ENCODE measurements at regions of chr17 and their contacts with region 1.

Region 1: GRCh38 chr17:49779739-49780231 is 8.7 kb upstream of the KAT7 start:
- DNase-seq: peak; percentile 81
- H3K4me3 ChIP-seq: no peak overlapping the region
- H3K27ac ChIP-seq: no peak overlapping the region
- H3K4me1 ChIP-seq: peaks cover 15% of the 10 kb centered on the region
- H3K27me3 ChIP-seq: no peaks in the 10 kb centered on the region
- CTCF ChIP-seq: peak; percentile 53 to 78

Region 2: GRCh38 chr17:49258394-49258793 is 521.4 kb before region 1 on chr17:
- CTCF ChIA-PET with region 1: interaction called, 17 read pairs
- dilution Hi-C with region 1: no loop called
- in situ Hi-C with region 1: no loop called
- intact Hi-C with region 1: no loop called
- DNase-seq: no peak
- H3K4me3 ChIP-seq: no peak overlapping the region
- H3K27ac ChIP-seq: no peak overlapping the region
- H3K4me1 ChIP-seq: peaks cover 12% of the 10 kb centered on the region
- H3K27me3 ChIP-seq: no peaks in the 10 kb centered on the region
- CTCF ChIP-seq: no peak

Region 3: DNA sequence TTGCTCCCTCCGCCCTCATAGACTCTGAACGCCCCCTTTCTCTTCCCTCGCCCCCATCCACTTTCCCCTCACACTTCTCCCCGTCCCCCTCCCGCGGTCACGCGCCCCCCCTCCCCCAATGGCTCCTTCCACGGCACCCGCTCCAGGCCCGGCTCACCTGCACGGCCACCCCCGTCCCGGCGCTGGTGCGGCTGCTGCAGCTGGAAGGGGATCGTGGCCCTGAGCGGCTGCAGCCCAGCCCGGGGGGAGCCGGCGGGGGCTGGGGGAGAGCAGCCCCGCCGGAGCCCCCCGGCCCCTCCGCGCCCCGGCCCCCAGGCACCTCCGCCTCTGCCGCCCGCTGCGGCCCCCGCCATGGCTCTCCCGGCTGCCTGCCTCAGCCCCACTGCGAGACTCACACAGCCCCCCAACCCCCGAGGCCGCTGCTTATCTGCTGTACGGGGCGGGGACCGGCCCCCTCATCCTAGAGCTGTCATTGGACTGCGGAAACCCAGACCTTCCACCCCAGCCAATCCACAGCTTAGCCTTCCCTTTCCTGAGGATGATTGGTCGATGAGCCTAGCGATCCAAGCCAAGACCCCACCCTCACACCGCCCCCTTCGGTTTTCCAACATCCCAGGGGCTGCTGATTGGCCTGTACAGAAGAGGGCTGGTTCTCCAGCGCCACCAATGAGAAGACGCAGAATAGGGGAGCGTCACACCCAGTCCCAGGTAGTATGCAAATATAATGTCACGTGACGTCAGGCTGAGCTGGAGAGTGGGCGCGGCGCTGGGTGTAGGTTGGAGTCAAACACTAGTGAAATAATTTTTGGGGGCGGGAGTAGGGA is 15.8 kb before region 1 on chr17 and contains the start of gene FAM117A:
- CTCF ChIA-PET with region 1: no interaction called
- dilution Hi-C with region 1: no loop called
- in situ Hi-C with region 1: no loop called
- intact Hi-C with region 1: loop called (anchors 2 kb)
- DNase-seq: peak; percentile 99
- H3K4me3 ChIP-seq: peak within 1 kb of the TSS; percentile 58 to 73 (median 66)
- H3K27ac ChIP-seq: peak within 1 kb of the TSS; percentile 23
- H3K4me1 ChIP-seq: peaks cover 23% of the 10 kb centered on the region
- H3K27me3 ChIP-seq: no peaks in the 10 kb centered on the region
- CTCF ChIP-seq: no peak
- total RNA-seq, gene FAM117A: 2.8 to 5.9 TPM

Region 4: GRCh38 chr17:49851387-49852291 is 71.9 kb after region 1 on chr17:
- CTCF ChIA-PET with region 1: no interaction called
- dilution Hi-C with region 1: no loop called
- in situ Hi-C with region 1: no loop called
- intact Hi-C with region 1: no loop called
- DNase-seq: no peak
- H3K4me3 ChIP-seq: peak overlapping the region; percentile 29 to 44 (median 41)
- H3K27ac ChIP-seq: no peak overlapping the region
- H3K4me1 ChIP-seq: peaks cover 9% of the 10 kb centered on the region
- H3K27me3 ChIP-seq: peaks cover 6% of the 10 kb centered on the region
- CTCF ChIP-seq: peak; percentile 23 to 36

Region 5: DNA sequence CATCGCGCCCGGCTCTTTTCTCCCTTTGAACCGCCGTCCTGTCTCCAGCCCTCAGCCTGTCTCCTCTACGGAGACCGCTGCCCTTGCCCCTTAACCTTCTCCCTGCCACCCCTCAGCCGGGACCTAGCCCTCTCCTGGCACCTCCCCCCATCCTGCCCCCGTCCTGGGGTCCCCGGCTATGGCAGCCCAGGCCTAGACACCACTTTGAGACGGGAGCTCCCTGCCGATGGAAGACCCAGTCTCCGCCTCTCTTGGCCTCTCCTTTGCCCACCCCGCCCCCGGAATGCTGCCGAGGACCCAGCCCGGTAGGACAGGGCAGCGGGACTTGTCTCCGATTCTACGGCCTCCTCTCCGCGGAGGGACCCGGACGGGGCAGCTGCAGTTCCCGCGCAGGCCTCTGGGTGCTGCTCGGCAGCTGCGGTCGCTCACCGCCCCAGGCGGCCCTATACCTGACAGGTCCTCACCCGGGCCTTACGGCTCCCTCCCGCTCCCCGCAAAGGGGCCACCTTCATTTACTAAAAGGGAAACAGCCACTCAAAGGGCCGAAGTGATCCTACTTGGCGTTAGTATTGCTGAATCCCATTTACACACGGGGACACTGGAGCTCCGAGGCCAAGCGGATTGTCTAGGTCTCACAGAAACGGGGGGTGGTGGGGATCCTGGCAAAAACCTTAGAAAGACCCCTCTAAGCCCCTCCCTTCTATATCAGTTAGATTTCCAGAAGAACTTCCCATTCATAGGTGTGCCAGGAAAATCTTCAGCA is 100.7 kb after region 1 on chr17:
- CTCF ChIA-PET with region 1: no interaction called
- dilution Hi-C with region 1: no loop called
- in situ Hi-C with region 1: no loop called
- intact Hi-C with region 1: no loop called
- DNase-seq: peak; percentile 36
- H3K4me3 ChIP-seq: no peak overlapping the region
- H3K27ac ChIP-seq: no peak overlapping the region
- H3K4me1 ChIP-seq: no peaks in the 10 kb centered on the region
- H3K27me3 ChIP-seq: peaks cover 2% of the 10 kb centered on the region
- CTCF ChIP-seq: peak; percentile 86 to 98

Measured in mammary epithelial cell (primary cell).